Activated B cell treated with CpG ODN at 0.5 μM for 24 hours (primary cell): ENCODE measurements at regions of chr2 and their contacts with region 1.

Region 1: DNA sequence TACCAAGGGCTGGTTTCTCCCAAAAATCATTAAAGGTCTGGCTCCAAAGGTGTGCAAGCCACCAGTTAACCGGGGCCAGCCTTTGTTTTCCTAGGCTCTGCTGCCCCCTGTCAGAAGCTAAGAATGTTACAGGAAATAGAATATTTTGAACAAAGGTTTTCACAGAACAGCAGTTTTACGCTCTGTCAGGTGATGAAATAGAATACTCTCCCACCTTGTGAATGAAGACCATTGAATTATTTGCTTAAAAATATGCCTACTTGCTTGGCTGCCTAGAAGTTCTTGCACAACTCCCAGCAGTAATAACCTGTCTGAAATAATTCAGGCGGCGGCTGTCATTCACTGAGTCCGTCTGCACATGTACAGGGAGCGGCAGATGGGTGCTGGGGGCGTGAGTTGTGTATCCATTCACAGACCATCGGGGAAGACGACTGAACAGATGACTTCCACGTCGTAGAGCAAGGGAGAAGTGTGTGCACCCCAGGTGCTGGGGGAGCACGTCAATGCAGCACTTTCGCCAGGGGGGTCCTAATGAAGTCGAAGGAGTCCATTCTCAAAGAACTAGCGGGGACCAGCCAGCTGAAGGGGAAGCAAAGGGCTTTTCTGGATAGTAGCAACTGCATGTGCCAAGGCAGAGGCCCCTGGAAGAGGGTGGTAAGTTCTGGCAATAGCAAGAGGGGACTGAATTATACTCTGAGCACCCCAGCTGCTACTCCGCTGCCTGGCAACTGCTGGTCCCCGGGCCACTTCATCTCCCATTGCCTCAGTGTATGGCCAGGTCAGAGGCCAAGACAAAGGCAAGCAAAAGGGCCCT is 56.1 kb downstream of the SF3B1 start:
- DNase-seq: peak; percentile 29
- ATAC-seq: peak; percentile 66
- H3K4me3 Mint-ChIP-seq: no peak overlapping the region
- H3K27ac Mint-ChIP-seq: no peak overlapping the region
- H3K4me1 Mint-ChIP-seq: peaks cover 11% of the 10 kb centered on the region
- H3K27me3 Mint-ChIP-seq: no peaks in the 10 kb centered on the region
- CTCF ChIP-seq: peak; percentile 43

Region 2: GRCh38 chr2:196750982-196751635 is 627.6 kb before region 1 on chr2:
- CTCF ChIA-PET with region 1: interaction called, 8 read pairs
- POLR2A ChIA-PET with region 1: no interaction called
- intact Hi-C with region 1: loop called (anchors 1 kb)
- DNase-seq: peak; percentile 26
- ATAC-seq: peak; percentile 86
- H3K4me3 Mint-ChIP-seq: no peak overlapping the region
- H3K27ac Mint-ChIP-seq: no peak overlapping the region
- H3K4me1 Mint-ChIP-seq: peaks cover 5% of the 10 kb centered on the region
- H3K27me3 Mint-ChIP-seq: no peaks in the 10 kb centered on the region
- CTCF ChIP-seq: no peak

Region 3: GRCh38 chr2:196798980-196799379 is 579.7 kb before region 1 on chr2:
- CTCF ChIA-PET with region 1: interaction called, 4 read pairs
- POLR2A ChIA-PET with region 1: no interaction called
- intact Hi-C with region 1: loop called (anchors 1 kb)
- DNase-seq: no peak
- ATAC-seq: no peak
- H3K4me3 Mint-ChIP-seq: peak overlapping the region; percentile 97
- H3K27ac Mint-ChIP-seq: peak overlapping the region; percentile 92
- H3K4me1 Mint-ChIP-seq: peaks cover 18% of the 10 kb centered on the region
- H3K27me3 Mint-ChIP-seq: peaks cover 7% of the 10 kb centered on the region
- CTCF ChIP-seq: no peak

Region 4: DNA sequence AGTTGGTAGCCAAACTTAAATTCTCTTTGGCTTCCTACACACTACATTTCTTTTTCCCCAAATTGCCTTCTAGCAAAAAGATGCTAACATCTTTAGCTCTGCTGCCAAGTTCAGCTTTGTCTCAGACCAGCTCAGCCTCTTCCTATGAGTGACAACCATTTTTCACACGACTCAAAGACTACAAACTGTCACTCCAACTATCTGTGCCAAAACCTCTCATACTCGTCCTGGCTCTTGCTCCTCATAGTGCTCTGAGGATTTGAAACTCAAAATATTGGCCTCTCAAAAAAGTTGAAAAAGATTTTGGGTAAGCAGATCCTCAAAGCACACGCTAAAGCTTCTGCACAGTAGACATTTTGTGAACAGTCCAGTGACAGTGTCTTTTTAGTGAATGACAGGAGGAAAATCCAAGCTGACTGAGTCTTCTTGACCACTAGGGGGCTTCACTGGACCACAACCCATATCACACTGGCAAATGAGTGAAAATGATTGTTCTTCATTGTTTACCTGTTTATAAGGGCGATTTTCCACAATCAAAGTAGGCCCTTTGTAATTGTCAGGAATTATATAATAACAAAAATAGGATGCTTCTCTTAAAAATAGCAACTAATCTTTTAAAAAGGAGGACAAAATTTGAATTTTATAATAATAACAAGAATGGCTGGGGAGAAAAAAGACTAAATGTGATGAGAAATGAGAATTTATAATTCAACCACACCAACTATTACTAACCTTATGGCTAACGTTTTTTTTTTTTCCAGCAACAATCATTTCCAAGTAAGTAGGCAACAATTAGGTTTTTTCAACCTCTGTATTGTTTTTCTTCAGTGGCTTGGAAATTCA is 366.7 kb before region 1 on chr2:
- CTCF ChIA-PET with region 1: interaction called, 17 read pairs
- POLR2A ChIA-PET with region 1: interaction called, 4 read pairs
- intact Hi-C with region 1: loop called (anchors 1 kb)
- DNase-seq: no peak
- ATAC-seq: peak; percentile 57
- H3K4me3 Mint-ChIP-seq: no peak overlapping the region
- H3K27ac Mint-ChIP-seq: peak overlapping the region; percentile 74
- H3K4me1 Mint-ChIP-seq: peaks cover 5% of the 10 kb centered on the region
- H3K27me3 Mint-ChIP-seq: no peaks in the 10 kb centered on the region
- CTCF ChIP-seq: no peak

Region 5: GRCh38 chr2:197075759-197076337 is 302.9 kb before region 1 on chr2:
- CTCF ChIA-PET with region 1: interaction called, 11 read pairs
- POLR2A ChIA-PET with region 1: no interaction called
- intact Hi-C with region 1: loop called (anchors 1 kb)
- DNase-seq: no peak
- ATAC-seq: no peak
- H3K4me3 Mint-ChIP-seq: no peak overlapping the region
- H3K27ac Mint-ChIP-seq: no peak overlapping the region
- H3K4me1 Mint-ChIP-seq: peaks cover 1% of the 10 kb centered on the region
- H3K27me3 Mint-ChIP-seq: no peaks in the 10 kb centered on the region
- CTCF ChIP-seq: no peak

Region 6: DNA sequence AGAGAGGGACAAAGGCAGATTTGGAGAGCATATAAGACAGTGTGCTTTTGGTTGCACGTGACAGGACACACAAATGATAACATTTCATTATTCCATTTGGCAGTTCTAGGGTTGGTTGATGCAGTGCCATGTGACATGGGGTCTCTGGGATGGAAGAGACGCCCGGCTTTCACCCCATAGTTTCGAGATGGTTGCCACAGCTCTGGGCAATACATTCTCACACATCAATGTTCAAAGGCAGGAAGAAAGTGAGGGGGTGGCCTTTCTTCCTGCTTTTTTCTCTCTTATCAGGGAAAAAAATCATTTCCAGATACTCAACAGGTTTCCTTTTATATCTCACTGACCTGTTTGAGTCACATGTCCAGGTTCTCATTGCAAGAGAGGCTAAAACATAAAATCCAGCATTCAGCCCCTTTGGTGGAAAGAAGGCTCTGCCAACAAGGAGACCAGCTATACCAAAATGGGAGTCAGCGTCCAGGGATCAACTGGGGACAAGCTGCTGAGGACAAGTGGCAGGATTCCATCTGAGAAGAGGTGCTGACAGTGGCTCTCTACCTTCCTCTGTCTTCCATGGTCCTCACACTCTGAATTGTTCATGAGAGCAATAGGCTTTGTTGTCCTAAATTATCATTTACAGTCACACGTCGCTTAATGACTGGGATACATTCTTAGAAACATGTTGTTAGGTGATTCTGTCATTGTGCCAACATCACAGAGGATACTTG is 39.0 kb before region 1 on chr2:
- CTCF ChIA-PET with region 1: no interaction called
- POLR2A ChIA-PET with region 1: no interaction called
- intact Hi-C with region 1: no loop called
- DNase-seq: no peak
- ATAC-seq: no peak
- H3K4me3 Mint-ChIP-seq: no peak overlapping the region
- H3K27ac Mint-ChIP-seq: no peak overlapping the region
- H3K4me1 Mint-ChIP-seq: no peaks in the 10 kb centered on the region
- H3K27me3 Mint-ChIP-seq: no peaks in the 10 kb centered on the region
- CTCF ChIP-seq: no peak